Breast epithelium (tissue), 4 donors: ENCODE measurements at regions of chr10 and their contacts with region 1.

Region 1: DNA sequence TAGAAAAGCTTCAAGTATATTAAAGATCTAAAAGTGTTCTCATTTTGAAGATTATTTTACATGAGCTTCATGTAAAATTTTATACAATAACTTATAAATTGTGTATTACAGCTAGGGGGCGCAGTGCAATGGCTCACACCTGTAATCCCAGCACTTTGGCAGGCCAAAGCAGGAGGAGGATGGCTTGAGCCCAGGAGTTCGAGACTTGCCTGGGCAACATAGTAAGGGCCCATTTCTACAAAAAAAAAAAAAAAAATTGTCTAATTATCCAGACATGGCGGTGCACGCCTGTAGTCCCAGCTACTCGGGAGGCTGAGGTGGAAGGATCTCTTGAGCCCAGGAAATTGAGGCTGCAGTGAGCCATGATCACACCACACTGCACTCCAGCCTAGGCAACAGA is 16.6 kb downstream of the ACBD5 start:
- DNase-seq: no peak
- H3K4me3 ChIP-seq: no peak overlapping the region
- H3K27ac ChIP-seq: no peak overlapping the region
- H3K4me1 ChIP-seq: no peaks in the 10 kb centered on the region
- H3K27me3 ChIP-seq: no peaks in the 10 kb centered on the region
- CTCF ChIP-seq: peak in 2 of 3 donors; percentile 20 to 43
- POLR2A ChIP-seq: no peak

Region 2: GRCh38 chr10:27138277-27138676 is 85.7 kb before region 1 on chr10:
- intact Hi-C with region 1: loop called (anchors 10 kb)
- DNase-seq: no peak
- H3K4me3 ChIP-seq: no peak overlapping the region
- H3K27ac ChIP-seq: no peak overlapping the region
- H3K4me1 ChIP-seq: no peaks in the 10 kb centered on the region
- H3K27me3 ChIP-seq: no peaks in the 10 kb centered on the region
- CTCF ChIP-seq: no peak
- POLR2A ChIP-seq: no peak